ENCODE measurements at regions of chr16 and their contacts with region 1.

Region 1: DNA sequence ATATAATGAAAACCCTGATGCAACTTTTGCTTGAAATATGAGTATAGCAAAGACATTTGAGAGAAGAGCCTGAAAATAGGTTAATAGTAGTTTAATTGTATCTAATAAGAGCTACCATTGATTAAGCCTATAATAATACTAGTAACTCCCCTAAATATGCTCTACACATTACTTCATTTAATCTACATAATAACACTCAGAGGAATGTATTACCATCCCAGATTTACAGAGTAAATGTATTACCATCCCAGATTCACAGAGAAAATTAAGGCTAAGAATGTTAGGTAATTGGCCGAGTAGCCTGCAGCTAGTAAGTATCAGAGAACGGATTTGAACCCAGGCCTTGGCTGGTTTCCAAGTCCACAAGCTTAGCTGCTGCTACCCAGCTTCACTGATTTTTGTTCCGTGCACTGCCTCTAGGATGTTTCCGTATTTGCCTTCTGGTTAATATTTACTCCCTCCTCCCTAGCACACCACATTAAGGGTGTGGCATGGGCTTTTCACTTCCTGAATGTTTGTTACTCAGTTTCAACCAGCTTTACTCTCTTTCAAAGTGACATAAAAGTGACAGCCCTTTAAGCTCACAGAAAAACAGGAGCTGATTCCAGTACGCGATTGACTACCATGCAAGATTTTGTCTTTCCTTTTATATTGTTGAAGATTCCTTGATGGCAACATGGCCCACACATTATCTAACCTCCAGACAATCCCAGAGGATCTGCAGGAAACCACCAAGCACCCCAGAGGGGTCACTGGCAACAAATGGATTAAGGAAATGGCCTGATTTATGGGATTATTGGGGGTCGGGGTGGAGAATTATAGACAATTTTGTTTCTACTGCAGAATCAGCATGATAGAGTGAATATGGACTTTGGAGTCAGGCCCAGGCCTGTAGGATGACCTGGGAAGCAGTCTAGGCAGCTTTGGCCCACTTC is 26.7 kb upstream of the TOX3 start:
- DNase-seq: no peak
- ATAC-seq: no peak
- H3K4me3 ChIP-seq: no peak overlapping the region
- H3K27ac ChIP-seq: no peak overlapping the region
- H3K4me1 ChIP-seq: no peaks in the 10 kb centered on the region
- H3K27me3 ChIP-seq: peaks cover 0 to 21% (median 0%) of the 10 kb centered on the region in 7 donors
- CTCF ChIP-seq: no peak

Region 2: DNA sequence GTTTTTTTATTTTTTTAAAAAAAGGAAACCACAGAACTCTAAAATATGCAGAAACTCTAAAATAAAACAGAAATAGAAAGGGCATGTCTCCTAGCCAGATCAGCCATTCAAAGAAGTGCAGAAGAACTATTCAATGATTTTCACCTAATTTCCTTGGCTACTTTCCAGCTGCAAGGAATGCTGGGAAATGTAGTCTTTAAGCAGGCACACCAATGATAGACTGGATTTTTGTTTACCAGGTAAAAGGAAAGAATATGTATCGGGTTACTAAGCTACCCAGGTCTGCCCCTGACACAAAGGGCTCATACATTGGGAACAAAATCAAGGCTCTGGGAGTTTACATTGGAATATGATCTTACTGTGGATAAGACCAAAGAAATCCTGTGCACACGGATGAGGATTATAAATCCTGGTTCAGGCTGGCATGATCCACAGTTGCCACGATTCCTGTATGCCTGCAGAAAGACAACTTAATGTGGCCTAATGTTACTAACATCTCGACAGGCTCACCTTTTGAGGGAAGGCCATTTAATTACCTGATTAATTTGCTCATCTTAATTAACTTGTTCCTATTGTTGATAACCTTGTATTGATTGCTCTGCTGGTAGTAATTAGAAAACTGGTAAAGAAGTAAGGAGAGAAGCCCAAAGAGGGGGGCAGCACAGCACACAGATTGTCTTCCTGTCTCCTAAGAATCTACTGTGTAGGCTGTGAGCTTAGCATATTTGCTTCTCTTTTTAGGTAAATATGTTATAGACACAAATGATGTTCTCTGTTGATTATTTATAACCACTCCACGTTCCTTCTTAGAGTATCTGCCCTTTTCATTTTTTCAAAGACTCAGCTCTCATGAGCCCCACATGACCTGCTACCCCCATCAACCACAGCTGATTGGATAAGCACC is 24.2 kb after region 1 on chr16:
- intact Hi-C with region 1: no loop called
- DNase-seq: no peak
- ATAC-seq: no peak
- H3K4me3 ChIP-seq: no peak overlapping the region
- H3K27ac ChIP-seq: no peak overlapping the region
- H3K4me1 ChIP-seq: no peaks in the 10 kb centered on the region
- H3K27me3 ChIP-seq: no peaks in the 10 kb centered on the region
- CTCF ChIP-seq: no peak

Region 3: GRCh38 chr16:52621651-52622050 is 48.0 kb after region 1 on chr16:
- intact Hi-C with region 1: loop called in 1 of 10 experiments (anchors 2 kb)
- DNase-seq: no peak
- ATAC-seq: no peak
- H3K4me3 ChIP-seq: no peak overlapping the region
- H3K27ac ChIP-seq: no peak overlapping the region
- H3K4me1 ChIP-seq: no peaks in the 10 kb centered on the region
- H3K27me3 ChIP-seq: peaks cover 0 to 12% (median 0%) of the 10 kb centered on the region in 7 donors
- CTCF ChIP-seq: no peak

Measured in heart right ventricle (tissue), 16 donors.